Transverse colon (tissue), 4 donors: ENCODE measurements at regions of chr7 and their contacts with region 1.

Region 1: GRCh38 chr7:123557398-123558288 is at the start of gene NDUFA5:
- DNase-seq: peak; percentile 98
- H3K4me3 ChIP-seq: peak within 1 kb of the TSS; percentile 64 to 84 (median 74)
- H3K27ac ChIP-seq: peak within 1 kb of the TSS; percentile 88 to 93 (median 88)
- H3K4me1 ChIP-seq: peaks cover 4 to 45% (median 11%) of the 10 kb centered on the region in 4 donors
- H3K27me3 ChIP-seq: no peaks in the 10 kb centered on the region
- CTCF ChIP-seq: peak in 1 of 5 experiments; percentile 13
- EP300 ChIP-seq: no peak
- POLR2A ChIP-seq: peak; percentile 78
- total RNA-seq, gene NDUFA5: 29.9 to 78.3 (median 56.8) TPM

Region 2: DNA sequence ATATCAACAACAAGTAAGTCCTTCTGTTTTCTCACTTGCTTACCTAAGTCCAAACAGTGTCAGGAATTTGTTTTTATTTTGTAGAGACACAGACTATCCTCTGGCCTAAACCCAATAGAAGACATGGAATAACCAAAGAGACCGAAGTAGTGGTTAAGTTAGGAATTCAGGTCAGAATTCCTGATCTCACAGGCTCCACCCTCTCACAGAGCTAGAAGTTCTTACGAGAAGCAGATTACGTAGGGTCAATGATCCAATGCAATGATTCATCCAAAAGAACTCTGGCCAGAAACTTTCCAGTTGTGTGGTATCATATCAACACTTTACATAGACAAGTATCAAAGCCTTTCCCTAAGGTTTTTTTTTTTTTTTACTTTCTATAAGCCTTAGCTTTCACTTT is 97.0 kb before region 1 on chr7:
- in situ Hi-C with region 1: loop called in 1 of 4 experiments (anchors 25 kb)
- intact Hi-C with region 1: no loop called
- DNase-seq: no peak
- H3K4me3 ChIP-seq: no peak overlapping the region
- H3K27ac ChIP-seq: no peak overlapping the region
- H3K4me1 ChIP-seq: no peaks in the 10 kb centered on the region
- H3K27me3 ChIP-seq: no peaks in the 10 kb centered on the region
- CTCF ChIP-seq: no peak
- EP300 ChIP-seq: no peak
- POLR2A ChIP-seq: no peak